KBM-7 (cell line): ENCODE measurements at regions of chr1 and their contacts with region 1.

Region 1: DNA sequence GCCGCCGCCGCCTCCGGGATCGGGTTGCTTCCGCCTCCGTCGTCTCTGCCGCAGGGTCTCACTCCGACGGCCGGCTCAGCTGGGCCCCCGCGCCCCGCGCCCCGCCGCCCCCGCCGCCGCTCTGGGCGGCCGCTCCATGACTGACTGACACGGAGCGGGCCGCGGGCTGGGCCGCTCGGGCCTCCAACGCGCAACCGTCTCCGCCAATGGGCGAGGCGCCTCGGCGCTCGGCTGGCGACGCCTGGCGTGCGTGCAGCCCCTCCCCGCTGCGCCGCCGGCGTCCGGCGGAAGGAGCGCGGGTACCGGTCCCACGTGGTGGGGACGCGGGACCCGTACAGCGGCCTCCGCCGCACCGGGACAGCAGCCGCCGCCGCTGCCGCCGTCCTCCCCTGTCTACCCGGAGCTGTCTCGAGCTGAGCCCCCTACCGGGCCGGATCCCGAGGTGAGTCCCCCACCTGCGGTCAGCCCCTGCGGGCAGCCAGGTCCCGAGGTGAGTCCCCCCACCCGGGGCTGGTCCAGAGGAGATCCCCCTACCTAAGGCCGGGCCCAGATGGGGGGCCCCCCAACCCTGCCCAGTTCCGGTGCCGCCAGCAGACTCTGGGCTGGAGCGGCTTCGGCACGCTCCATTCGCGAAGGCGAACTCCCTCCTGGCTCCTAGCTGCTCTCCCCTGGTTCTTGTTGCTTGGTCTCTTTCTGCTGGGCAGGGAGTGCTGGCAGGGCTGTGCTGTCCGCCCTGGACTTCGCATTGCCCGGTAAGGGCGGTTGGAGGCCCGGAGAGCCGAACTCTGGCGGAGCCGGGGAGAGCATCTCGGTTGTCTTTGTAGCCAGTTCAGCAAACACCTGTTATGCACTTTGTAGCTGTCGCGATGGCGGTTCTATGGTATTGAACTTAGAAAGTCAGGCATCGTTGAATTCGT is at the starts of genes TAF5L and URB2:
- DNase-seq: peak; percentile 84

Region 2: GRCh38 chr1:229579059-229579673 is 47.0 kb before region 1 on chr1:
- in situ Hi-C with region 1: loop called (anchors 10 kb)
- DNase-seq: peak; percentile 84

Region 3: DNA sequence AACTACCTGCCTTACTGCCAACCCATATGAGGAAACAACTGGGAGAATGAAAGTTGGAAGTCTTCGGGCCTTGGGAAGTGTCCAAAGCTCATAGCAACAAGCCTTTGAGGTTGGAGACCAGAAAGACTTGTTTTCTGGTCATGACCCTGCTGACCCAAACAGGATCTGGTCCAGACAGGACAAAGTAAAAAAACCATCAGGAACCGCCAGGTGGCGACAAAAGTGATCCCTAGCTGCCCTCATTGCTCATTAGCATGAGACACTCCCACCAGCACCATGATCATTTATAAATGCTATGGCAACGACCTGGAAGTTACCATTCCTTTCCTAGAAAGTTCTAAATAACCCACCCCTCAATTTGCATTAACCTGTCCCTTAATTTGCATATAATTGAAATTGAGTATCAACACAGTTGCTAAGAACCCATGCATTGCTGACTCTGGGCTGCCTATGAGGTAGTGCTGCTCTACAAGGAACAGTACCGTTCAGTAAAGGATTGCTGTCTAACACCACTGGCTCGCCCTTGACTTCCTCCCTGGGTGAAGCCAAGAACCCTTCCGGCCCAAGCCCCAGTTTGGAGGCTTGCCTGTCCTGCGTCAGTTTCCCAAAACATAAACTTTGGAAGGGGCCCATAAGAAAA is 88.9 kb after region 1 on chr1:
- in situ Hi-C with region 1: no loop called
- DNase-seq: peak; percentile 73